PC-9 (cell line): ENCODE measurements at regions of chr7 and their contacts with region 1.

Region 1: DNA sequence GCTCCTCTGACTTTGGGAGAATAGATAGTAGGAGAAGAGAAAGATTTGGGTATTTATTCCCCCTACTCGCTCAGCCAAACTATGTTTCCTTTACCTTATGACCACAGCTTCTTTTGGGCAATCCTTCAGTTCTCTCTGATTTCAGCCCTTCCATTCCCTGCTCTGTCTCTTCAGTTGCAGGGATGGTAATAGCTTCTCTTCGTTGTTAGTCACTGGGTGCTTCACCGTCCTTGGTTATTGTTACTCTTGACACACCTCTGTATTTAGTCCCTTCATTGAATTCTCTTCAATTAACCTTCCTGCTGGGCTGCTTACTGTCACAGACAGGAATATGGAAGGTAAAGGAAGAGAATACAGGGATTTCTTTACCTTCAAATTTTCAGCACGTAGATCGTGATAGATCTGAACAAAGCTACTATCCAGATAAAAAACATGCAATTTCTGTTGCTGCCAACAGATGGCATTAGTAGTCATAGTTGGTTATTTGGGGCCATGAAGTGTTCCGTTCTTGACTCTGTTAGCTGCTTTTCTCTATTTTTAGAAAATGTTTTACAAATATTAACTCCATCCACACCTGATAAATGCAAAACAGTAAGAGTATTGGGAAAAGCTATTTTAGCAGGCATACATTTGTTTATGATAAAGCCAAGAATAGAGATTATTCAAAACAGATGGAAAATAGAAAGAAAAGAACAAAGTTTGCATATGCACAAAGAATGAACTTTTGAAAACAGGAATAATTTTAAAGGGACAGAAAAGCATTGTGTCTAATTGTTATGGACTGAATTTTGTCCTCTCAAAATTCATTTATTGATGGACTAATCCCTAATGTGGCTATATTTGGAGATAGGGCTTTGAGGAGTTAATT is 14.0 kb upstream of the PTTG1IP2 start:
- DNase-seq: no peak
- H3K4me3 ChIP-seq: no peak overlapping the region
- H3K27ac ChIP-seq: no peak overlapping the region
- H3K4me1 ChIP-seq: no peaks in the 10 kb centered on the region
- H3K27me3 ChIP-seq: no peaks in the 10 kb centered on the region
- CTCF ChIP-seq: peak; percentile 70

Region 2: GRCh38 chr7:90070227-90070626 is 385.2 kb before region 1 on chr7:
- CTCF ChIA-PET with region 1: interaction called, 14 read pairs
- POLR2A ChIA-PET with region 1: no interaction called
- intact Hi-C with region 1: no loop called
- DNase-seq: peak; percentile 41 to 54
- H3K4me3 ChIP-seq: no peak overlapping the region
- H3K27ac ChIP-seq: no peak overlapping the region
- H3K4me1 ChIP-seq: no peaks in the 10 kb centered on the region
- H3K27me3 ChIP-seq: no peaks in the 10 kb centered on the region
- CTCF ChIP-seq: no peak

Region 3: GRCh38 chr7:90595801-90596671 is 140.6 kb after region 1 on chr7 and contains the start of gene CDK14:
- CTCF ChIA-PET with region 1: no interaction called
- POLR2A ChIA-PET with region 1: no interaction called
- intact Hi-C with region 1: loop called (anchors 2 kb)
- DNase-seq: peak in 1 of 2 experiments; percentile 79
- H3K4me3 ChIP-seq: peak within 1 kb of the TSS; percentile 59
- H3K27ac ChIP-seq: no peak within 1 kb of the TSS
- H3K4me1 ChIP-seq: peaks cover 8% of the 10 kb centered on the region; the same call in 1 of the 2 replicates
- H3K27me3 ChIP-seq: peaks cover 24% of the 10 kb centered on the region
- CTCF ChIP-seq: no peak; the same call in 1 of the 2 replicates
- total RNA-seq, gene CDK14: 39.1 and 41.6 TPM in 2 replicates

Region 4: DNA sequence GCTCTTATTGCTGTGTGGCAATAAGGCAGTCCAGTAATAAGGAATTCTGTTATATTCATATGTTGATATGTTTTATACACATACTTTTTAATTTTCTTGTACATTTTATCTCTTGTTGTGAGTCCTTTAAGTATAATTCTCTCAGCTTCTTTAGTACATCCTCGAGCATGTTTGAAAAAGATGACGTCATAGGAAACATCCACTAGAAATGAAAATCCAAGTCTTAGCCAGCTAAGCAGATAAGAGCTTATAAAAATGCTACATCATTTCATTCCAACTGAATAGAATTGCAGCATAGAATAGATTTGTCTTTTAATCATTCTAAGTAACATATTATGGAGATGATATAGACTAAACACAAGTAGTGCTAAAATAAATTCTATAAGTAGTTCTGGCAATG is 525.1 kb after region 1 on chr7:
- CTCF ChIA-PET with region 1: no interaction called
- POLR2A ChIA-PET with region 1: no interaction called
- intact Hi-C with region 1: no loop called
- DNase-seq: no peak
- H3K4me3 ChIP-seq: no peak overlapping the region
- H3K27ac ChIP-seq: no peak overlapping the region
- H3K4me1 ChIP-seq: no peaks in the 10 kb centered on the region
- H3K27me3 ChIP-seq: no peaks in the 10 kb centered on the region
- CTCF ChIP-seq: no peak

Region 5: GRCh38 chr7:91034459-91035368 is 579.3 kb after region 1 on chr7:
- CTCF ChIA-PET with region 1: interaction called, 16 read pairs
- POLR2A ChIA-PET with region 1: no interaction called
- intact Hi-C with region 1: loop called (anchors 1 kb)
- DNase-seq: peak in 1 of 2 experiments; percentile 42
- H3K4me3 ChIP-seq: no peak overlapping the region
- H3K27ac ChIP-seq: no peak overlapping the region
- H3K4me1 ChIP-seq: no peaks in the 10 kb centered on the region
- H3K27me3 ChIP-seq: no peaks in the 10 kb centered on the region
- CTCF ChIP-seq: peak; percentile 53